PC-9 (cell line): ENCODE measurements at regions of chr1 and their contacts with region 1.

Region 1: GRCh38 chr1:85612704-85613361 is 32.3 kb downstream of the CCN1 start:
- DNase-seq: peak; percentile 60 to 98
- H3K4me3 ChIP-seq: peak overlapping the region; percentile 12; the same call in 1 of the 2 replicates
- H3K27ac ChIP-seq: peak overlapping the region; percentile 91
- H3K4me1 ChIP-seq: peaks cover 48% of the 10 kb centered on the region
- H3K27me3 ChIP-seq: no peaks in the 10 kb centered on the region
- CTCF ChIP-seq: peak; percentile 65

Region 2: GRCh38 chr1:84795966-84796600 is 816.8 kb before region 1 on chr1:
- CTCF ChIA-PET with region 1: no interaction called
- POLR2A ChIA-PET with region 1: no interaction called
- intact Hi-C with region 1: no loop called
- DNase-seq: no peak
- H3K4me3 ChIP-seq: no peak overlapping the region
- H3K27ac ChIP-seq: no peak overlapping the region
- H3K4me1 ChIP-seq: no peaks in the 10 kb centered on the region
- H3K27me3 ChIP-seq: no peaks in the 10 kb centered on the region
- CTCF ChIP-seq: no peak

Region 3: GRCh38 chr1:85061711-85062424 is 551.0 kb before region 1 on chr1:
- CTCF ChIA-PET with region 1: no interaction called
- POLR2A ChIA-PET with region 1: no interaction called
- intact Hi-C with region 1: no loop called
- DNase-seq: peak; percentile 88 to 92
- H3K4me3 ChIP-seq: peak overlapping the region; percentile 61
- H3K27ac ChIP-seq: no peak overlapping the region
- H3K4me1 ChIP-seq: 0 out of 2 replicates have a peak, but pooled peaks cover 9% of the 10 kb centered on the region
- H3K27me3 ChIP-seq: no peaks in the 10 kb centered on the region
- CTCF ChIP-seq: no peak

Region 4: DNA sequence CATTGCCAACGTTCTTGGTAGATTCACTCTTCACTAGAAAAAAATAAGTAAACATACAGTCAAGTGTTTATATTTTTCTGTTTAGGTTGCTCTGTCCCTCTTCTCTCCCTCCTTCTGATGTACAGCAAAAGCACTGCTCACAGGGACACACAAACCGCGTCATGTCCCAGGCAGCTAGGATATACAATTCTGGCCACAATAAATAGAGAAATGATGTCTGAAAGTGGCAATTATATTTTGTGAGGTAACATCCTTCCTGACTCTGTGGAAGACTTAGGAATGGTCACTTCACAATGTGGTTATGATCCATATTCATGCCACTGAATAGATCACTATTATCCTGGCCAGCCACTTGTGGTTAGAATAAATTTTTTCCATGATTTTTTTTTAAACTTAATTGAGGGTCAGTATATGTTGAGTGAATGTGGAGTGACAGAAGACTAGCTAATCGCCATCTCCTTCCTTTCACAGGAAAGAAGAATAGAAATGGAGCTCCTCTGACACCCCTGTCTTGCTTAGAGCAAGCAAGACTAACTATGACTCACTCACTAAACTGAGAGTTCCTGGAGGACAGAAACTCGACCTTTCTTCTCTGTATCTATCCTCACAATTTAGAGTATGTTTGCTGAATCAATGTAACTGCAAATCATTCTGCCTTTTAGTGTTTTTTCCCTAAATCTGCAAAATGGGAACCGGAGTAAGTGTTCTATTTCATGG is 41.4 kb after region 1 on chr1:
- CTCF ChIA-PET with region 1: interaction called, 4 read pairs
- POLR2A ChIA-PET with region 1: interaction called, 5 read pairs
- intact Hi-C with region 1: loop called (anchors 2 kb)
- DNase-seq: peak in 1 of 2 experiments; percentile 34
- H3K4me3 ChIP-seq: no peak overlapping the region
- H3K27ac ChIP-seq: peak overlapping the region; percentile 20
- H3K4me1 ChIP-seq: peaks cover 24% of the 10 kb centered on the region
- H3K27me3 ChIP-seq: no peaks in the 10 kb centered on the region
- CTCF ChIP-seq: no peak